Caco-2 (cell line): ENCODE measurements at regions of chr10 and their contacts with region 1.

Region 1: GRCh38 chr10:11782793-11783557 is 40.2 kb upstream of the PROSER2 start:
- DNase-seq: peak in 1 of 2 experiments; percentile 84
- H3K4me3 ChIP-seq: no peak overlapping the region
- H3K4me3 Mint-ChIP-seq: peak overlapping the region; percentile 4
- H3K27ac Mint-ChIP-seq: peak overlapping the region; percentile 60
- H3K4me1 ChIP-seq: peaks cover 10% of the 10 kb centered on the region; the same call in 1 of the 2 replicates
- H3K4me1 Mint-ChIP-seq: peaks cover 8% of the 10 kb centered on the region
- H3K27me3 ChIP-seq: no peaks in the 10 kb centered on the region
- H3K27me3 Mint-ChIP-seq: no peaks in the 10 kb centered on the region
- CTCF ChIP-seq: peak; percentile 87 to 90

Region 2: GRCh38 chr10:11713186-11713743 is 69.7 kb before region 1 on chr10:
- CTCF ChIA-PET with region 1: no interaction called
- POLR2A ChIA-PET with region 1: no interaction called
- intact Hi-C with region 1: no loop called
- DNase-seq: no peak
- H3K4me3 ChIP-seq: no peak overlapping the region
- H3K4me3 Mint-ChIP-seq: no peak overlapping the region
- H3K27ac Mint-ChIP-seq: no peak overlapping the region
- H3K4me1 ChIP-seq: peaks cover 15% of the 10 kb centered on the region
- H3K4me1 Mint-ChIP-seq: peaks cover 13% of the 10 kb centered on the region
- H3K27me3 ChIP-seq: no peaks in the 10 kb centered on the region
- H3K27me3 Mint-ChIP-seq: no peaks in the 10 kb centered on the region
- CTCF ChIP-seq: no peak

Region 3: GRCh38 chr10:11823122-11823988 is 40.4 kb after region 1 on chr10 and contains the start of gene PROSER2:
- CTCF ChIA-PET with region 1: interaction called, 21 read pairs
- POLR2A ChIA-PET with region 1: no interaction called
- intact Hi-C with region 1: loop called (anchors 1 kb)
- DNase-seq: peak; percentile 77 to 87
- H3K4me3 ChIP-seq: peak within 1 kb of the TSS; percentile 94
- H3K4me3 Mint-ChIP-seq: peak within 1 kb of the TSS; percentile 93
- H3K27ac Mint-ChIP-seq: peak within 1 kb of the TSS; percentile 79
- H3K4me1 ChIP-seq: peaks cover 43% of the 10 kb centered on the region
- H3K4me1 Mint-ChIP-seq: peaks cover 42% of the 10 kb centered on the region
- H3K27me3 ChIP-seq: no peaks in the 10 kb centered on the region
- H3K27me3 Mint-ChIP-seq: no peaks in the 10 kb centered on the region
- CTCF ChIP-seq: no peak
- total RNA-seq, gene PROSER2: 123 and 134 TPM in 2 replicates

Region 4: GRCh38 chr10:11830836-11831519 is 48.0 kb after region 1 on chr10:
- CTCF ChIA-PET with region 1: interaction called, 13 read pairs
- POLR2A ChIA-PET with region 1: no interaction called
- intact Hi-C with region 1: no loop called
- DNase-seq: peak; percentile 83 to 89
- H3K4me3 ChIP-seq: no peak overlapping the region
- H3K4me3 Mint-ChIP-seq: peak overlapping the region; percentile 71
- H3K27ac Mint-ChIP-seq: peak overlapping the region; percentile 91
- H3K4me1 ChIP-seq: peaks cover 69% of the 10 kb centered on the region
- H3K4me1 Mint-ChIP-seq: peaks cover 46% of the 10 kb centered on the region
- H3K27me3 ChIP-seq: no peaks in the 10 kb centered on the region
- H3K27me3 Mint-ChIP-seq: no peaks in the 10 kb centered on the region
- CTCF ChIP-seq: no peak

Region 5: DNA sequence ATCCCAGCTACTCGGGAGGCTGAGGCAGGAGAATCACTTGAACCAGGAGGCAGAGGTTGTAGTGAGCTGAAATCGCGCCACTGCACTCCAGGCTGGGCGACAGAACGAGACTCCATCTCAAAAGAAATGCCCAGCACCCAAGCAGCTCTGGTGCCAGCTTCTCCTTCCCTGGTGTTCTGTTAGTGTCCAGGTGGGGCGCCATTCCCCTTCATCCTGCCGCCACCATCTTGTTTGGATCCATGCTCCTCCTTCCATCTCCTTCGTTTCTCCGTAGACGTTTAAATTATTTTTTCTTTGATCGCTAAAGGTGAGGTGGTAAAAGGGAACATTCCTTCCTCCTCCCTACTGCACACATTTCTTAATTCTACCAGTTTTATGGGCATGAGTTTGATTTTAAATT is 70.5 kb after region 1 on chr10:
- CTCF ChIA-PET with region 1: interaction called, 11 read pairs
- POLR2A ChIA-PET with region 1: no interaction called
- intact Hi-C with region 1: loop called (anchors 2 kb)
- DNase-seq: no peak
- H3K4me3 ChIP-seq: no peak overlapping the region
- H3K4me3 Mint-ChIP-seq: no peak overlapping the region
- H3K27ac Mint-ChIP-seq: peak overlapping the region; percentile 5
- H3K4me1 ChIP-seq: peaks cover 29% of the 10 kb centered on the region
- H3K4me1 Mint-ChIP-seq: peaks cover 38% of the 10 kb centered on the region
- H3K27me3 ChIP-seq: no peaks in the 10 kb centered on the region
- H3K27me3 Mint-ChIP-seq: no peaks in the 10 kb centered on the region
- CTCF ChIP-seq: peak; percentile 24 to 38

Region 6: GRCh38 chr10:11934262-11934661 is 151.3 kb after region 1 on chr10:
- CTCF ChIA-PET with region 1: interaction called, 11 read pairs
- POLR2A ChIA-PET with region 1: no interaction called
- intact Hi-C with region 1: no loop called
- DNase-seq: no peak
- H3K4me3 ChIP-seq: no peak overlapping the region
- H3K4me3 Mint-ChIP-seq: no peak overlapping the region
- H3K27ac Mint-ChIP-seq: peak overlapping the region; percentile 10
- H3K4me1 ChIP-seq: peaks cover 19% of the 10 kb centered on the region
- H3K4me1 Mint-ChIP-seq: peaks cover 28% of the 10 kb centered on the region
- H3K27me3 ChIP-seq: no peaks in the 10 kb centered on the region
- H3K27me3 Mint-ChIP-seq: no peaks in the 10 kb centered on the region
- CTCF ChIP-seq: no peak

Region 7: GRCh38 chr10:11986593-11987216 is 203.7 kb after region 1 on chr10:
- CTCF ChIA-PET with region 1: interaction called, 46 read pairs
- POLR2A ChIA-PET with region 1: no interaction called
- intact Hi-C with region 1: loop called (anchors 1 kb)
- DNase-seq: peak; percentile 82 to 91
- H3K4me3 ChIP-seq: no peak overlapping the region
- H3K4me3 Mint-ChIP-seq: peak overlapping the region; percentile 20
- H3K27ac Mint-ChIP-seq: peak overlapping the region; percentile 20
- H3K4me1 ChIP-seq: peaks cover 11% of the 10 kb centered on the region
- H3K4me1 Mint-ChIP-seq: peaks cover 12% of the 10 kb centered on the region
- H3K27me3 ChIP-seq: no peaks in the 10 kb centered on the region
- H3K27me3 Mint-ChIP-seq: no peaks in the 10 kb centered on the region
- CTCF ChIP-seq: peak; percentile 96